ENCODE measurements at regions of chr6 and their contacts with region 1.

Region 1: GRCh38 chr6:124854338-124854922 is 107.8 kb upstream of the RNF217 start:
- DNase-seq: peak; percentile 16
- ATAC-seq: no peak
- H3K4me3 ChIP-seq: no peak overlapping the region
- H3K27ac ChIP-seq: no peak overlapping the region
- H3K4me1 ChIP-seq: no peaks in the 10 kb centered on the region
- H3K27me3 ChIP-seq: no peaks in the 10 kb centered on the region
- CTCF ChIP-seq: peak; percentile 54

Region 2: DNA sequence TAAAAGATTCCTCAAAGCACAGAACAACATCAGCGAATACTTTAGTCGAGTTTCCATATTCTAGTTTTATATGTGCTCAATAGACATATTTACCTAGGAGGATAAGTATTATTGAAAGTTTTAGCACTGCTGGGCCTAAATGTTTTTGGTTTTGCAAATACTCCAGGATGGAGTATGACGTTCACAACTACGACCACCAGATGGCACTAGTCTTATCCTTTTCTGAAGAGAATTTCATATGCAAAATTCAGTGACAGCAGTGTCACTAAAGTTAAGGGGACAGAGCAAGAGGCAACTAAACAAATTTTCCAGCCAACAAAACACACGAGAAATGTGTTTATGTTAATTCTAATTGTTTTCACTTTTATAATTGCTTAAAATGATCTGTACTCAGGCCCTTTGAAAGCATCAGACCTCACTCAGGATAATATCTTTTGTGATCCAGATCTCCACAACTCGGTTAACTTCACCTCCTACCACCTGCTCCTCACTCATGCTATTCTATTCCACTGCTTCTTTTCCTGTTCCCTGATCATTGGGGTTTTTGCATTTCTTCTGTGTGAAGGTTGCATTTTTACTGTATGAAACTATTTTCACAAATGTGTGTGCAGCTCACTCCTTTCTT is 1438.5 kb before region 1 on chr6:
- CTCF ChIA-PET with region 1: no interaction called
- POLR2A ChIA-PET with region 1: no interaction called
- intact Hi-C with region 1: loop called (anchors 5 kb)
- DNase-seq: peak; percentile 59
- ATAC-seq: no peak
- H3K4me3 ChIP-seq: no peak overlapping the region
- H3K27ac ChIP-seq: no peak overlapping the region
- H3K4me1 ChIP-seq: no peaks in the 10 kb centered on the region
- H3K27me3 ChIP-seq: peaks cover 5% of the 10 kb centered on the region; the same call in 1 of the 2 replicates
- CTCF ChIP-seq: peak; percentile 62

Region 3: GRCh38 chr6:124661097-124661661 is 193.3 kb before region 1 on chr6:
- CTCF ChIA-PET with region 1: no interaction called
- POLR2A ChIA-PET with region 1: no interaction called
- intact Hi-C with region 1: no loop called
- DNase-seq: no peak
- ATAC-seq: no peak
- H3K4me3 ChIP-seq: no peak overlapping the region
- H3K27ac ChIP-seq: no peak overlapping the region
- H3K4me1 ChIP-seq: no peaks in the 10 kb centered on the region
- H3K27me3 ChIP-seq: no peaks in the 10 kb centered on the region
- CTCF ChIP-seq: no peak

Region 4: GRCh38 chr6:124955108-124955856 is 100.9 kb after region 1 on chr6:
- CTCF ChIA-PET with region 1: no interaction called
- POLR2A ChIA-PET with region 1: no interaction called
- intact Hi-C with region 1: no loop called
- DNase-seq: no peak
- ATAC-seq: no peak
- H3K4me3 ChIP-seq: no peak overlapping the region
- H3K27ac ChIP-seq: no peak overlapping the region
- H3K4me1 ChIP-seq: no peaks in the 10 kb centered on the region
- H3K27me3 ChIP-seq: no peaks in the 10 kb centered on the region
- CTCF ChIP-seq: no peak

Measured in PC-3 (cell line).